B cell (primary cell): ENCODE measurements at regions of chr6 and their contacts with region 1.

Region 1: DNA sequence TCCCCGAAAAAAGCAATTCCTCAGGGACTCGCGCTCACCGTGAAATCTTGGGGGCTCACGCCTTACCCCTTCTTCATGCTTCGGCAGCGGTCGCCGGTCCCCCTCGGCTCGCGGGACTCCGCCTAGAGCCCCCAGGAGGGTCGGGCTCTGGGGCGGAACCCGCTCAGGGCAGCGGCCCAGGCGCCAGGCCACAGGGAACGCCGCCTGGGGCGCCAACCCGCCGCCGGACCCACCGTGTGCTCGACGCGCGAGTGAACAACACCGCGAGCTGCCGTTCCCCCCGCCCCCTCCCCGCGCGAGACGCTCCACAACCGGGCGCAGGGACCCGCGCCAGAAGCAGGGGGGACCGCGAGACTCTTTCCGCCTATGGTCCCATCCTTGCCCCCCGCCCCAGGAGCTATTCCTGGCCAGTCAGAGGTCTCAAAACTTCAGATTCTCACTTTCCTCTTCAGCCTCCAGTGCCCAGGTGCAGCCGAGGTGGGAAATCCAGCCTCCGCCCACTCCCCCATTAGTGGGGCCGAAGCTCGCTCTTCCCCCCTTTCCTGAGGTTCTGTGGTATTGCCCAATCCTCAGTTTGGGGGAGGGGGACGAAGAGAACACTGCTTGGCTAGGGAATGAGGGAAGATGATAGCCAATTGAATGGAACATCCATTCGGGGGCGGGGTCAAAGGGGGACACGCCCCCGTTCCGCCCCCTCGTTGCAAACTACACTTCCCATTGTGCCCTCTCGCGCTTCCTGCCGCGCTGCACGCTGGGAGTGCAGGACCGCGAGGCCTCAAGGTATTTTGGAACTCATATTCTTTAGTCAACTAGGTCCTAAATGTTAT is at the start of gene WASF1:
- DNase-seq: peak; percentile 95
- ATAC-seq: peak; percentile 78
- H3K4me3 ChIP-seq: peak within 1 kb of the TSS; percentile 66 to 100 (median 90)
- H3K4me3 Mint-ChIP-seq: no peak within 1 kb of the TSS
- H3K27ac ChIP-seq: peak within 1 kb of the TSS; percentile 72 to 88
- H3K27ac Mint-ChIP-seq: peak within 1 kb of the TSS; percentile 94
- H3K4me1 ChIP-seq: peaks cover 27 to 36% of the 10 kb centered on the region in 2 donors
- H3K4me1 Mint-ChIP-seq: peaks cover 8% of the 10 kb centered on the region
- H3K27me3 ChIP-seq: no peaks in the 10 kb centered on the region
- H3K27me3 Mint-ChIP-seq: no peaks in the 10 kb centered on the region
- CTCF ChIP-seq: no peak
- total RNA-seq, gene WASF1: 8.4 and 10.8 TPM in 2 replicates

Region 2: GRCh38 chr6:109440331-109441068 is 739.1 kb before region 1 on chr6 and contains the starts of genes PPIL6 and SMPD2:
- CTCF ChIA-PET with region 1: no interaction called
- POLR2A ChIA-PET with region 1: no interaction called
- intact Hi-C with region 1: loop called (anchors 2 kb)
- DNase-seq: peak; percentile 94
- ATAC-seq: peak; percentile 87
- H3K4me3 ChIP-seq: peak within 1 kb of the TSS; percentile 0 to 93 (median 90)
- H3K4me3 Mint-ChIP-seq: peak within 1 kb of the TSS; percentile 97
- H3K27ac ChIP-seq: peak within 1 kb of the TSS; percentile 79 to 98
- H3K27ac Mint-ChIP-seq: peak within 1 kb of the TSS; percentile 96
- H3K4me1 ChIP-seq: peaks cover 21 to 30% of the 10 kb centered on the region in 2 donors
- H3K4me1 Mint-ChIP-seq: peaks cover 31% of the 10 kb centered on the region
- H3K27me3 ChIP-seq: no peaks in the 10 kb centered on the region
- H3K27me3 Mint-ChIP-seq: no peaks in the 10 kb centered on the region
- CTCF ChIP-seq: no peak
- total RNA-seq, gene PPIL6: 0.53 and 1.8 TPM in 2 replicates
- total RNA-seq, gene SMPD2: 35.7 and 36.4 TPM in 2 replicates

Region 3: DNA sequence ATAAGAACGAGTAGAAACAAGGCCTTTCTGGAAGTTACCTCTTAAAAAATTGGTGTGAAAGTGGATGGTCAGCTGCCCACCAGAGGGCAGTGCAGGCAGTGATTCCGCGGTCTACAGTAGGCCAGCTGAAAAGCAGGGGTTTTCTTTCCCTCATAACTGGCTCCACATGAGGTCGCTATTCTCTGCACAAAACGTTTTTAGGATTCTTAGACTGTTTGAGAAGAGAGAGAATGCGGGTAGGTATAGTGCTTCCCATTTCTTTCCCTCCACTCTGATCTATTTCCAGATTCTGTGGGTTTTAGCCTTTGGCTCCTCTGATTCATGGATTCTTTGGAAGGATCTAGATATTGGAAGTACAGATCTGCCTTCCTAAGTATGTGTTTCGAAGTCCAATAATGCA is 474.4 kb before region 1 on chr6:
- CTCF ChIA-PET with region 1: interaction called, 9 read pairs
- POLR2A ChIA-PET with region 1: no interaction called
- intact Hi-C with region 1: loop called (anchors 5 kb)
- DNase-seq: peak; percentile 89
- ATAC-seq: peak; percentile 99
- H3K4me3 ChIP-seq: no peak overlapping the region
- H3K4me3 Mint-ChIP-seq: no peak overlapping the region
- H3K27ac ChIP-seq: no peak overlapping the region
- H3K27ac Mint-ChIP-seq: no peak overlapping the region
- H3K4me1 ChIP-seq: peaks cover 24 to 25% of the 10 kb centered on the region in 2 donors
- H3K4me1 Mint-ChIP-seq: peaks cover 65% of the 10 kb centered on the region
- H3K27me3 ChIP-seq: no peaks in the 10 kb centered on the region
- H3K27me3 Mint-ChIP-seq: no peaks in the 10 kb centered on the region
- CTCF ChIP-seq: peak; percentile 98

Region 4: GRCh38 chr6:110098511-110099116 is 81.0 kb before region 1 on chr6:
- CTCF ChIA-PET with region 1: no interaction called
- POLR2A ChIA-PET with region 1: no interaction called
- intact Hi-C with region 1: no loop called
- DNase-seq: no peak
- ATAC-seq: no peak
- H3K4me3 ChIP-seq: no peak overlapping the region
- H3K4me3 Mint-ChIP-seq: no peak overlapping the region
- H3K27ac ChIP-seq: no peak overlapping the region
- H3K27ac Mint-ChIP-seq: no peak overlapping the region
- H3K4me1 ChIP-seq: peaks cover 7 to 12% of the 10 kb centered on the region in 2 donors
- H3K4me1 Mint-ChIP-seq: peaks cover 10% of the 10 kb centered on the region
- H3K27me3 ChIP-seq: no peaks in the 10 kb centered on the region
- H3K27me3 Mint-ChIP-seq: no peaks in the 10 kb centered on the region
- CTCF ChIP-seq: no peak

Region 5: GRCh38 chr6:110207652-110208051 is 28.0 kb after region 1 on chr6:
- CTCF ChIA-PET with region 1: interaction called, 76 read pairs
- POLR2A ChIA-PET with region 1: interaction called, 6 read pairs
- intact Hi-C with region 1: loop called (anchors 1 kb)
- DNase-seq: no peak
- ATAC-seq: no peak
- H3K4me3 ChIP-seq: no peak overlapping the region
- H3K4me3 Mint-ChIP-seq: no peak overlapping the region
- H3K27ac ChIP-seq: no peak overlapping the region
- H3K27ac Mint-ChIP-seq: no peak overlapping the region
- H3K4me1 ChIP-seq: peaks cover 25 to 29% of the 10 kb centered on the region in 2 donors
- H3K4me1 Mint-ChIP-seq: peaks cover 40% of the 10 kb centered on the region
- H3K27me3 ChIP-seq: no peaks in the 10 kb centered on the region
- H3K27me3 Mint-ChIP-seq: no peaks in the 10 kb centered on the region
- CTCF ChIP-seq: no peak

Region 6: GRCh38 chr6:110815217-110816109 is 635.8 kb after region 1 on chr6 and contains the start of gene CDK19:
- CTCF ChIA-PET with region 1: no interaction called
- POLR2A ChIA-PET with region 1: no interaction called
- intact Hi-C with region 1: loop called (anchors 2 kb)
- DNase-seq: peak; percentile 99
- ATAC-seq: peak; percentile 76
- H3K4me3 ChIP-seq: peak within 1 kb of the TSS; percentile 83 to 99 (median 93)
- H3K4me3 Mint-ChIP-seq: peak within 1 kb of the TSS; percentile 97
- H3K27ac ChIP-seq: peak within 1 kb of the TSS; percentile 84 to 93
- H3K27ac Mint-ChIP-seq: peak within 1 kb of the TSS; percentile 99
- H3K4me1 ChIP-seq: peaks cover 33 to 34% of the 10 kb centered on the region in 2 donors
- H3K4me1 Mint-ChIP-seq: peaks cover 39% of the 10 kb centered on the region
- H3K27me3 ChIP-seq: no peaks in the 10 kb centered on the region
- H3K27me3 Mint-ChIP-seq: no peaks in the 10 kb centered on the region
- CTCF ChIP-seq: no peak
- total RNA-seq, gene CDK19: 44.8 and 45.3 TPM in 2 replicates